ENCODE measurements at regions of chr4 and their contacts with region 1.

Region 1: GRCh38 chr4:25234390-25235370 is 847 bp downstream of the PI4K2B start:
- DNase-seq: peak; percentile 54
- H3K4me3 ChIP-seq: peak overlapping the region; percentile 99
- H3K27me3 ChIP-seq: no peaks in the 10 kb centered on the region
- CTCF ChIP-seq: peak; percentile 60

Region 2: DNA sequence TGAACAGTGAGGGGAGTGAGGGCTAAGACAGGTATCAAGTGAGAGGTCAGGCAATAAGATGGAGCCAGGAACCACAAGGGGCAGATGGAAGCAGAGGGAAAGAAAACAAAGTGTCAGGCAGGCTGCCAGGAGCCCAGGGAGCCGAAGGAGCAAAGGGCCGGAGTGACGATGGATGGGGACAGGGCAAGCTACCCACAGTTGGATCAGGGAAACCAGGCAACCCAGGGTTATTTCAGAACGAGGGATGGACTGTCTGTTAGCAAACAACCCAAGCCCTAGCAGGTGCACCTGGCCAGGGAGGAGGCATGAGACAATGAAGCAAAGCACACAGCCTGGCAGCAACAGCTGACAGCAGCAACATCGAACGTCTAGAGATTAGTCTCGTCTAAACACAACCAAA is 589.0 kb after region 1 on chr4:
- CTCF ChIA-PET with region 1: no interaction called
- POLR2A ChIA-PET with region 1: interaction called, 18 read pairs
- DNase-seq: no peak
- H3K4me3 ChIP-seq: no peak overlapping the region
- H3K27me3 ChIP-seq: no peaks in the 10 kb centered on the region
- CTCF ChIP-seq: no peak